Ascending aorta (tissue), 2 donors: ENCODE measurements at regions of chr1 and their contacts with region 1.

Region 1: GRCh38 chr1:44213222-44214112 is at the start of gene DMAP1:
- DNase-seq: peak; percentile 35 to 89
- H3K4me3 ChIP-seq: peak within 1 kb of the TSS; percentile 72 to 91
- H3K27ac ChIP-seq: peak within 1 kb of the TSS; percentile 63 to 79
- H3K4me1 ChIP-seq: peaks cover 2 to 7% of the 10 kb centered on the region in 2 donors
- H3K27me3 ChIP-seq: no peaks in the 10 kb centered on the region
- CTCF ChIP-seq: peak in 1 of 3 experiments; percentile 17
- total RNA-seq, gene DMAP1: 42.7 TPM

Region 2: GRCh38 chr1:44008259-44008658 is 205.2 kb before region 1 on chr1:
- intact Hi-C with region 1: loop called (anchors 5 kb)
- DNase-seq: no peak
- H3K4me3 ChIP-seq: no peak overlapping the region
- H3K27ac ChIP-seq: no peak overlapping the region
- H3K4me1 ChIP-seq: peaks cover 3 to 10% of the 10 kb centered on the region in 2 donors
- H3K27me3 ChIP-seq: no peaks in the 10 kb centered on the region
- CTCF ChIP-seq: no peak

Region 3: DNA sequence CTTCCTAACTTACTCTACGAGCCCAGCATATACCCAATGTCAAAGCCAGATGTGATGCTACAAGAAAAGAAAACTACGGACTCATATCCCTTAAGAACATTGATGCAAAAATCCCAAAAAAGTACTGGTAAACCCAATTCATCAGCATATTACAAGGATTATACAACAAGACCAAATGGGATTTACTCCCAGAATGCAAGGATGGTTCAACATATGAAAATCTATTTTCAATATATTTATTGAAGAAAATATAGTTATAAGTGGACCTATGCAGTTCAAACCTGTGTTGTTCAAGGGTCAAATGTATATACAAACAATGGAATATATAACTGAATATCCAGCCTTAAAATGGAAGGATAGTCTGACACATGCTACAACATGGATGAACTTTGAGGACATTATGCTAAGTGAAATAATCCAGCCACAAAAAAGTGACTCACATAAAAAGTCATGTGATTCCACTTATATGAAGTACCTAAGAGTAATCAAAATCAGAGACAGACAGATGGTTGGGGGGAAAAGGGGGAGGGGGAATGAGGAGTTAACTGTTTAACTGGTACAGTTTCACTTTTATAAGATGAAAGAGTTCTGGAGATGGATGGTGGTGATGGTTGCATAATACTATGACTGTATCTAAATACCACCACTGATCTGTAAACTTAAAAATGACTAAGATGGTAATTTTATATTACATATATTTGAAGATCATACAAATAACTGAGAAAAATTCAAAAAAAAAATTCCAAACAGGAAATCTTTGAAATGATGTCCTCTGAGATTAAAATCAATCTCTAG is 68.3 kb before region 1 on chr1:
- intact Hi-C with region 1: no loop called
- DNase-seq: no peak
- H3K4me3 ChIP-seq: no peak overlapping the region
- H3K27ac ChIP-seq: no peak overlapping the region
- H3K4me1 ChIP-seq: no peaks in the 10 kb centered on the region
- H3K27me3 ChIP-seq: no peaks in the 10 kb centered on the region
- CTCF ChIP-seq: no peak

Region 4: GRCh38 chr1:44263568-44264450 is 50.3 kb after region 1 on chr1:
- intact Hi-C with region 1: no loop called
- DNase-seq: no peak
- H3K4me3 ChIP-seq: no peak overlapping the region
- H3K27ac ChIP-seq: no peak overlapping the region
- H3K4me1 ChIP-seq: no peaks in the 10 kb centered on the region
- H3K27me3 ChIP-seq: no peaks in the 10 kb centered on the region
- CTCF ChIP-seq: no peak

Region 5: DNA sequence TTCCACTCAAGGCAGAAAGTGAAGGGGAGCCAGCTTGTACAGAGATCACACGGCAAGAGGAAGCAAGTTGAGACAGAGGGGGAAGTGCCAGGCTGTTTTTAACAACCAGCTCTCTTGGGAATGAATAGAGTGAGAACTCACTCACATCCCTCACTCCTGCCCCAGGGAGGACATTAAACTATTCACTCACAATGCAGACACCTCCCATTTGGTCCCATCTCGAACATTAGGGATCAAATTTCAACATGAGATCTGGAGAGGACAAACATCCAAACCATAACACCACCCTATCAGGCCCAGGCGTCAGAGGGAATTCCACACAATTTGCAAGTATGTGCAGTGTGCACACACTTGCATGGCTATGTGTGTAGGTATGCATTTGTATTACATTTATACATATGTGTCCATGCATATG is 62.5 kb after region 1 on chr1:
- intact Hi-C with region 1: no loop called
- DNase-seq: no peak
- H3K4me3 ChIP-seq: no peak overlapping the region
- H3K27ac ChIP-seq: no peak overlapping the region
- H3K4me1 ChIP-seq: no peaks in the 10 kb centered on the region
- H3K27me3 ChIP-seq: no peaks in the 10 kb centered on the region
- CTCF ChIP-seq: no peak

Region 6: DNA sequence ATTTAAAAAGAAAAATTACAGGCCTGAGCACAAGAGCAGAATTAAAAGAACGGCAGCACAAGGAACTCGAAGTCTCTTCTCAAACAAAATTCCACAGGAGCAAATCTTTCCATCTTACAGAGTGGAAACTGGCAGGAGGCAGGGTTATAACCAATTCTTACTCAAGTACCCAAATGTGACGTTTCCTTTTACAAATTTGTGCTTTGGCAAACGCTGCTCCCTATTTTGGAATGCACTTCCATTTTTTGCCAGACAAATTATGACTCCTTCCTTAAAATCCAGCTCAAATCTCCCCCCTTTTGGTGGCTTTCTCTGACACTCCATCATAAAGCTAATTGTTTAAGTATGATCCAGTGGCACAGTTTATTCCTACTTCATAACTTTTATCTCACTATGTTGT is 133.8 kb after region 1 on chr1:
- intact Hi-C with region 1: loop called (anchors 5 kb)
- DNase-seq: peak in 1 of 2 donors; percentile 73
- H3K4me3 ChIP-seq: no peak overlapping the region
- H3K27ac ChIP-seq: peak overlapping the region; percentile 84
- H3K4me1 ChIP-seq: peaks cover 9 to 25% of the 10 kb centered on the region in 2 donors
- H3K27me3 ChIP-seq: no peaks in the 10 kb centered on the region
- CTCF ChIP-seq: peak in 1 of 3 experiments; percentile 12

Region 7: GRCh38 chr1:44652445-44653106 is 439.1 kb after region 1 on chr1:
- intact Hi-C with region 1: loop called (anchors 5 kb)
- DNase-seq: peak in 1 of 2 donors; percentile 86
- H3K4me3 ChIP-seq: no peak overlapping the region
- H3K27ac ChIP-seq: peak overlapping the region in 1 of 2 donors; percentile 42
- H3K4me1 ChIP-seq: no peaks in the 10 kb centered on the region
- H3K27me3 ChIP-seq: no peaks in the 10 kb centered on the region
- CTCF ChIP-seq: peak; percentile 91 to 97 (median 91)